Psoas muscle (tissue), 8 donors: ENCODE measurements at regions of chr2 and their contacts with region 1.

Region 1: GRCh38 chr2:137947728-137948336 is 16.4 kb upstream of the HNMT start:
- DNase-seq: peak; percentile 64 to 76
- ATAC-seq: peak in 2 of 4 donors; percentile 50 to 61
- H3K4me3 ChIP-seq: no peak overlapping the region
- H3K27ac ChIP-seq: no peak overlapping the region
- H3K4me1 ChIP-seq: no peaks in the 10 kb centered on the region
- H3K27me3 ChIP-seq: no peaks in the 10 kb centered on the region
- CTCF ChIP-seq: peak; percentile 58

Region 2: DNA sequence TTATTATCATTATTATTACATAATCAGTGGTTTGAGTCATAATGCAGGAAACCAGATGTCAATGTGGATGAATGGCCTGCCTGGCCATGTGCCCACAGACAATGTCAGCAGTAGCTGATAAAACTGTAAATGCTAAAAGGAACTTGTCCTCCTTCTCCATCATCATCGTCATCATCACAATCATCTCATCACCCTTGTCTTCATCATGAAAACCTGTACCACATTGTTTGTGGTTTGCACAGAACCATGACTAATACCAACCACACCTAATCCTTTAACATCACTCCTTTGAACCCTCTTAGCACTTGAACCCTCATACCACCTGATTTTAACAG is 112.4 kb after region 1 on chr2:
- intact Hi-C with region 1: no loop called
- DNase-seq: peak; percentile 53 to 73
- ATAC-seq: no peak
- H3K4me3 ChIP-seq: no peak overlapping the region
- H3K27ac ChIP-seq: no peak overlapping the region
- H3K4me1 ChIP-seq: no peaks in the 10 kb centered on the region
- H3K27me3 ChIP-seq: no peaks in the 10 kb centered on the region
- CTCF ChIP-seq: no peak

Region 3: DNA sequence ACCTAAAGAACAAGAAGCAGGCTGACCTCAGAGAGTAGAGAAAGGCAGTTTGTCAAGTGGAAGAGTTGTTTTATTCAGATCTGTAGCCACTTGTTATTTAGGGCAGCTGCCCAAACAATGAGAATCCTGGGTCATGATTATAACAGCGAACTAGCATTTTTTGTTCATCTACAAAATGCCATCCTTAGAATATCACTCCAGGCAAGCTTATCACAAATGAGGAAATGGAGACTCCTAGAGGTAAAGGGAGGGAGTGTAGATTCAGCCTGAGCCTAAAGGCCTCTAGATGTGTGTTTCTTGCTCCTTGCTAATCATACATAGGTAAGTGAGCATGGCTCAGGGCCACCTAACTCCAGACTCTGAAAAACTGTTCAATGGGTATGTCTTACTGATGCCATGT is 142.5 kb after region 1 on chr2:
- intact Hi-C with region 1: loop called in 1 of 2 experiments (anchors 10 kb)
- DNase-seq: no peak
- ATAC-seq: no peak
- H3K4me3 ChIP-seq: no peak overlapping the region
- H3K27ac ChIP-seq: no peak overlapping the region
- H3K4me1 ChIP-seq: no peaks in the 10 kb centered on the region
- H3K27me3 ChIP-seq: no peaks in the 10 kb centered on the region
- CTCF ChIP-seq: peak; percentile 46

Region 4: GRCh38 chr2:138373993-138374408 is 426.2 kb after region 1 on chr2:
- intact Hi-C with region 1: loop called in 1 of 2 experiments (anchors 5 kb)
- DNase-seq: no peak
- ATAC-seq: peak in 1 of 4 donors; percentile 57
- H3K4me3 ChIP-seq: no peak overlapping the region
- H3K27ac ChIP-seq: no peak overlapping the region
- H3K4me1 ChIP-seq: no peaks in the 10 kb centered on the region
- H3K27me3 ChIP-seq: no peaks in the 10 kb centered on the region
- CTCF ChIP-seq: peak; percentile 59